K562 (cell line): ENCODE measurements at regions of chr1 and their contacts with region 1.

Region 1: DNA sequence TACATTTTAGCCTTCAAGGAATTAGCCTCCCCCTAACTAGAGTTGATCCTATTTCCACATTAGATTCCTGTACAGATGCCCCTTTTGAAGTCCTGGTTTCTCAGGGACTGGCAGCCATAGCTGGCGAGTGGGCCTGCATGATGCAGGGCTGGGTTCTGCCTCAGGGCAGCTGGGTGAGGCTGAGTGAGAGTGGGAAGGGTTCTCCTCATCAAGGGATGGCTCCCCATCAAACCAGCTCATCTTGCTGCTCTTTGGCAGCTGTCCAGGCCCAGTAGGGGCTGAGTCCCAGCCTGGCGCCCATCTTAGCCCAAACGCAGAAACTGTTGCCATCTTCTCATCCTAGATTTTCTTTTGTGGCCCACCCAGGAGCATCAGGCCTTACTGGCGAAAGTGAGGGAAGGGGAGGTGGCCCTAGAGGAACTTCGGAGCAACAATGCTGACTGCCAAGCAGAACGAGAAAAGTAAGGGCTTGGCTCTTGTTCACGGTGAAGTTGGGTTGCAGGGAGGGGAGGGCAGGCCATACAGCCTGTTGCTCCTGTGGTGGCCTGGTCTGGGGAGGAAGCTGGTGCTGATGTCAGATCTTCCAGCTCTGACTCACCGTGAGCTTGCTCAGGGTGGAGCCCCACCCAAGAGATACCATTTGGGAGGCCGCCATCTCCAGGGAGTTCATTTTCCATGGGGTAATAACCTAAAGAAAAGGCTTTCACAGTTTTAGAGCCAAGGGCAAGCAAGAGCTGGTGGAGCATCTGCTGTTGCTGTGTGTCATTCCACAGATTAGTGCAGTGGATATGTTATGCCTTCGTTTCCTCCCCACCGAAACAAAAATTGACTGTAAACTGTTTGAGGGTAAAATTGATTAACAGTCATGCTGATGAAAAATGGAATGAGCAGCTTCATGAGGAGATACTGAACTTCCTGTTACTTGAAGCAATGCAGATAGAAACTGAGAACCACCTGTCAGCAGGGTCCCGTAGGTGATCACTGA is 34.7 kb downstream of the TUFT1 start:
- DNase-seq: peak; percentile 83 to 94 (median 86)
- ATAC-seq: peak; percentile 100
- H3K4me3 ChIP-seq: no peak overlapping the region
- H3K27ac ChIP-seq: peak overlapping the region; percentile 58
- H3K4me1 ChIP-seq: peaks cover 8 to 26% of the 10 kb centered on the region in 2 experiments; a peak in 4 of 5 replicates
- H3K27me3 ChIP-seq: no peaks in the 10 kb centered on the region
- CTCF ChIP-seq: no peak
- EP300 ChIP-seq: peak; percentile 63; the same call in 1 of the 2 replicates
- POLR2A ChIP-seq: peak; percentile 35; the same call in 1 of the 2 replicates
- RAD21 ChIP-seq: no peak

Region 2: GRCh38 chr1:151539990-151540981 is 34.6 kb before region 1 on chr1 and contains the start of gene TUFT1:
- CTCF ChIA-PET with region 1: no interaction called
- POLR2A ChIA-PET with region 1: interaction called, 4 read pairs
- in situ Hi-C with region 1: no loop called
- intact Hi-C with region 1: loop called (anchors 5 kb)
- DNase-seq: peak; percentile 94 to 97 (median 96)
- ATAC-seq: peak; percentile 98
- H3K4me3 ChIP-seq: peak within 1 kb of the TSS; percentile 52
- H3K27ac ChIP-seq: peak within 1 kb of the TSS; percentile 70
- H3K4me1 ChIP-seq: peaks cover 5 to 14% of the 10 kb centered on the region in 2 experiments; a peak in 4 of 5 replicates
- H3K27me3 ChIP-seq: peaks cover 2 to 5% of the 10 kb centered on the region in 2 experiments; a peak in 2 of 5 replicates
- CTCF ChIP-seq: no peak
- EP300 ChIP-seq: no peak
- POLR2A ChIP-seq: peak; percentile 75
- RAD21 ChIP-seq: no peak
- polyA plus RNA-seq, gene TUFT1: 1.7 to 2.0 TPM